Mammary epithelial cell (primary cell): ENCODE measurements at regions of chr14 and their contacts with region 1.

Region 1: DNA sequence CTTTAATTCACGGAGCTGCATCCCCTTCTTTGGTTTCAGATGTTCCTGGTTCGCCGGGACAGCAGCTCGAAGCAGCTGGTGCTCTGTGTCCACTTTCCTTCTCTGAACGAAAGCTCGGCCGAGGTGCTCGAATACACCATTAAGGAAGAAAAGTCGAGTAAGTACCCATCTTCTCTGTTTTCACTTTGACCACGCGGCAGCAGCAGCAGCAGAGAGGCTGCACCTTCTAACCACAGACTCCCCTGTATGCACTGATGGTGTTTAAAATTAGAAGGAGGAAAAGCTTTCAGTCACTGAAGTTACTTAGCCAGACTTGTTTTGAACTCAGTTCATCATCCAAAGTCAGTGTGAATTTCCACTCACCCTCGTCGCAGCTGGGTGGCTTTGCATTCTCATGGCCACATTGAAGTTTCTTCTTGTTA is 63.8 kb downstream of the RIN3 start:
- DNase-seq: no peak
- H3K4me3 ChIP-seq: no peak overlapping the region
- H3K27ac ChIP-seq: no peak overlapping the region
- H3K4me1 ChIP-seq: no peaks in the 10 kb centered on the region
- H3K27me3 ChIP-seq: no peaks in the 10 kb centered on the region
- CTCF ChIP-seq: no peak

Region 2: DNA sequence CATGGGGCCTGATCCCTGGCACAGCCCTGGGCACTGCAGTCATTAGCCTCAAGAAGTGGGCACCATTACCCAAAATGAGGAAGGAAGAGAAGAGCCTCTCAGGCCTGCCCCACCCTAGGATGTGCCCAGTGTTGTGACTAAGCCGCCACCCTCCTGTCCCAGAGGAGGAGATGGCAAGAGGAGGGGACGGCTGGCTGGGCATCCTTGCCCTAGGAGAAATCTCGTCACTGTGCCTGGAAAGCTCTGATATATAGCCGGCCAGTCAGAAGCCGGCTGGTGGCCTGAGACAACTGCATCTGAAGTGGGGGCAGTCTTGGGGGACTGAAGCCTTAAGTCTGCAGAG is 55.9 kb after region 1 on chr14:
- CTCF ChIA-PET with region 1: no interaction called
- dilution Hi-C with region 1: loop called (anchors 5 kb)
- in situ Hi-C with region 1: no loop called
- intact Hi-C with region 1: no loop called
- DNase-seq: no peak
- H3K4me3 ChIP-seq: no peak overlapping the region
- H3K27ac ChIP-seq: no peak overlapping the region
- H3K4me1 ChIP-seq: no peaks in the 10 kb centered on the region
- H3K27me3 ChIP-seq: no peaks in the 10 kb centered on the region
- CTCF ChIP-seq: no peak